Mucosa of descending colon (tissue), 3 donors: ENCODE measurements at regions of chr10 and their contacts with region 1.

Region 1: DNA sequence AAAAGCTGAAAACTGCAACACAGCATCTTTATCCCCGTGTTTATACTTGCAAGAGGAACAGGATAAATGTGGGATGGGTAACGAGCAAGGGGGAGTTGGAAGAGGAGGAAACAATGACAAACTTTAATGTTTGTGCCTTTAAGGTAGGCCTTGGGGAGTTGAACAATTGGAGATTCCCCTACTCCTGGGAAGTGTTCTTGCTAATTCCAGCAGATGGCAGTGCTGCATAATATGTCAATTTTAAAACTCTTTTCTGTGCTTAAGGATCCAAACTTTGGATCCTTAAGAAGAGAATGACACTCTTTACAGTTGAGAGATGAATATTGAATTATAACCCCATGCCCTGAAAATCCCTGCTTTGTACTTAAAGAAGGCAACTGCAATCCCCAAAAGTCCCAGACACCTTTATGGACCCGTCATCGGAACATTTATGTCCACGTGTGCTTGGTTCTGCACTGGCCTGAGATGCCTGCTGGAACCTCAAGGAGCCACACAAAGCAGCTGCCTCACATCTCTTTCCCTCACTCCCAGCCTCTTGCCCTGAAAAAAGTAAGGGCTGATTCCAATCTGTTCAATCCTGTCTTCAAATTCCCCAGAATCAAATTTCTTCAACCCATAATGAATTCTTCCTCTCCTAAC is 12.0 kb downstream of the IFIT5 start:
- DNase-seq: peak in 1 of 3 donors; percentile 50
- ATAC-seq: peak; percentile 72
- H3K4me3 ChIP-seq: no peak overlapping the region
- H3K4me1 ChIP-seq: no peaks in the 10 kb centered on the region
- CTCF ChIP-seq: no peak

Region 2: GRCh38 chr10:89241486-89242344 is 184.6 kb before region 1 on chr10:
- intact Hi-C with region 1: no loop called
- DNase-seq: no peak
- ATAC-seq: peak; percentile 55
- H3K4me3 ChIP-seq: no peak overlapping the region
- H3K4me1 ChIP-seq: no peaks in the 10 kb centered on the region
- CTCF ChIP-seq: no peak

Region 3: DNA sequence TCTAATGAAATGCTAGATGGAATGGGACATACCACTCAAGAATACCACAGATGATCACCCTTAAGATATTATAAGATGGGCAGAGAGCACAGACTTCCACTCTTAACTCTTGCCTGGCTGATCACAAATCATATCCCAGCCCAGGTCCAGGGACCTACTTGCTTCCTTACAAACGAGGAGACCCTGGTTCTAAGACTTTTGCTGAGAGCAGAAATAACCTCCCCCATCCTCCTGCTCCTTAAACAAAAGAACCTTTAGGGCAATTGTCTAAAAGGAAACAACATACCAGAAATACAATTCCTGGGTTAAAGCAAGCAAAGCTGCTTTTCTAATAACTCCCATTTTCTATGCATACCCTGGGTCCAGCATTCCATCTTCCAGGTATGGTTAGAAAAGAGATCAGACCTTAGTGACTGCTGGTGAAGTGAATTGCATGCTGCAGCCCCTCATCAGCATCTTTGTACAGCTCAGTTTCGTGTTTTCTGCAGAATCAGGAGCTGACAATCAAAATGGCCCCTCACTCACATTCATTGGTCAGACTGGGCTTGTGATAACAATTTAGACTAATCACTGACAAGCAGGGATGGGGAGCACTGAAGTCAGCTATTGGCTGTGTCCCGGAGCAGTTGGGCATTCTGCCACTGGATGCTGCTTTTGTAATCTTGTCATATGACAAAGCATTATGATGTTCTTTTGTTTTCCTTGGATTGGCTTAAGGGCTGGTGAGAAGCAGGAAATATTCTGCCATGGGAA is 84.0 kb before region 1 on chr10:
- intact Hi-C with region 1: no loop called
- DNase-seq: no peak
- ATAC-seq: no peak
- H3K4me3 ChIP-seq: no peak overlapping the region
- H3K4me1 ChIP-seq: peaks cover 12% of the 10 kb centered on the region
- CTCF ChIP-seq: no peak

Region 4: DNA sequence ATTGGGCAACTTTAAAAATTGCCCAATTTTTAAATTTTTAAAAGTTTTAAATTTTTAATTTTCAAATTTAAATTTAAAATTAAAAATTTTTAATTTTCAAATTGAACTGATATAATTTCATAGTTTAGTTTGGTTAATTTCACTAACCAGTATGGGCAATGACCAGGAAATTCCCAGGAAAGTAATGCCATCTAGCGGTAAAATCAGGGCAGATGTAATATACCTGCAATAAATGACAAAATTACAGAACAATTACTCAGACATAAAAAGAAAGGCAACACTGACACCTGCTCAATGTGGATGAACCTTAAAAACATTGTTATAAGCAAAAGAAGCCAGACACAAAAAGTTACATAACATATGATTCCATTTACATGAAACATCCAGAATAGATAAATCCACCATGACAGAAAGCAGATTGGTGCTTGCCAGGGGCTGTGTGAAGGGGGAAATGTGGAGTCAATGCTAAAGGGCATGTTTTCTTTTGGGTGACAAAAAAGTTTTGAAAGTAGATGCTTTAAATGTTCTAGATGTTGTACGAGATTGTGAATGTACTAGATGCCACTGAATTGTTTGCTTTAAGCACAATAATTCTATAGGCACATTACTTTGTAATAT is 137.6 kb after region 1 on chr10:
- intact Hi-C with region 1: loop called (anchors 2 kb)
- DNase-seq: peak in 1 of 3 donors; percentile 57
- ATAC-seq: peak; percentile 53
- H3K4me3 ChIP-seq: no peak overlapping the region
- H3K4me1 ChIP-seq: no peaks in the 10 kb centered on the region
- CTCF ChIP-seq: peak; percentile 37